Prostate gland (tissue), 2 donors: ENCODE measurements at regions of chr9 and their contacts with region 1.

Region 1: GRCh38 chr9:111037381-111038305 is 627 bp downstream of the LPAR1 start:
- DNase-seq: peak; percentile 34
- H3K4me3 ChIP-seq: peak overlapping the region; percentile 65 to 71
- H3K27ac ChIP-seq: peak overlapping the region; percentile 89 to 92
- H3K4me1 ChIP-seq: no peaks in the 10 kb centered on the region
- H3K27me3 ChIP-seq: no peaks in the 10 kb centered on the region
- CTCF ChIP-seq: peak in 3 of 4 experiments; percentile 7 to 40 (median 29)
- POLR2A ChIP-seq: peak; percentile 55

Region 2: DNA sequence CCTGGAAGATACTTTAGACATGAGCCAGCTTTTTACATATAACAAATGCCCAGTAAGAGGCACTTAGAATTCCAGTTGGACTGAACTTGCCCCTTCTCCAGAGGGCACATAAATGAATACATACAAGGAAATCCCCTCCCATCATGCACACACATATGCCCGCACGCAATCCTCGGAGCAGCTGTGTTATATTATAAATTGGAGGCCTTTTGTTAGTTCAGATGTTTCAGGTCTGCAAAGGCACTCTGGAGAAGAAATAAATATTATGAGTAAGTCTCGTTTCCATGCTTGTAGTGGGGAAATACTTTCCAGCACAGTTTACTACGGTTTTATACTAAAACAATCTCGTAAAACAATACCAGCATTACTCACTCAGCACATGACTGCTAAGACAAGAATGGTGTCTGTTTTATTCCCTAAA is 386.6 kb before region 1 on chr9:
- intact Hi-C with region 1: loop called (anchors 10 kb)
- DNase-seq: no peak
- H3K4me3 ChIP-seq: no peak overlapping the region
- H3K27ac ChIP-seq: peak overlapping the region; percentile 9 to 51
- H3K4me1 ChIP-seq: no peaks in the 10 kb centered on the region
- H3K27me3 ChIP-seq: no peaks in the 10 kb centered on the region
- CTCF ChIP-seq: no peak
- POLR2A ChIP-seq: no peak

Region 3: DNA sequence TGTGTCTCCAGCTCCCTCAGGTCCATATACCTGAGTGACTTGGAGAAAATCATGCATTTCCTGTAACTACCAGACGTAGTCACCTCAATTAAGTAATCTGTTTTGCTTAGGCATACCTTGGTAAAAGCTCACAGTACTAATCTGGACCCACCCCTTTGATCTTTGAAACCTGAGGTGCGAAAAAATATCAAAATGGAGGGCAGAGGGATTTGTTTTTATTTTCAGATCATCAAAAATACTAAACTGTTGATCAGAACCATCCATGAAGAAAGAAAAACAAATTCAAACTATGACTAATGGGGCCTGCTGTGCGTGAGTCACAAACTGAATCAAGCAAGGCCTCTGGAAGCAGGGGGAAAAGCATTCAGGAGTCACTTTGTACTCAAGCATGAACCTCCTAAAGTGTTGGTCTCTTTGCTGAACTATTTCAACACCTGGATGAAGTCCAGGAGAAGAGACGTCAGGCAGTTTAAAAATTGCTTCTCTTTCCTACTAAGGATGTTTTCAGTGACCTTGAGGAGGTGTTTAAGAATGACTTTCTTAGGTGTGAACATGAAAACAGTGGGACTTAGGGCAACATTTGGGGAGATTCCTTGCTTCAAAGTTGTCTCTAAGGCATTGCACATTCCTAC is 292.8 kb before region 1 on chr9:
- intact Hi-C with region 1: loop called (anchors 5 kb)
- DNase-seq: peak; percentile 26
- H3K4me3 ChIP-seq: no peak overlapping the region
- H3K27ac ChIP-seq: peak overlapping the region; percentile 69 to 73
- H3K4me1 ChIP-seq: no peaks in the 10 kb centered on the region
- H3K27me3 ChIP-seq: no peaks in the 10 kb centered on the region
- CTCF ChIP-seq: no peak
- POLR2A ChIP-seq: no peak

Region 4: GRCh38 chr9:111298731-111299598 is 261.3 kb after region 1 on chr9:
- intact Hi-C with region 1: loop called (anchors 5 kb)
- DNase-seq: peak; percentile 24
- H3K4me3 ChIP-seq: no peak overlapping the region
- H3K27ac ChIP-seq: peak overlapping the region in 1 of 2 donors; percentile 4
- H3K4me1 ChIP-seq: no peaks in the 10 kb centered on the region
- H3K27me3 ChIP-seq: no peaks in the 10 kb centered on the region
- CTCF ChIP-seq: peak; percentile 79 to 93 (median 92)
- POLR2A ChIP-seq: no peak